ENCODE measurements at regions of chr7 and their contacts with region 1.

Region 1: GRCh38 chr7:92421676-92422435 is 25.4 kb upstream of the GATAD1 start:
- DNase-seq: no peak
- H3K4me3 Mint-ChIP-seq: no peak overlapping the region
- H3K27ac Mint-ChIP-seq: no peak overlapping the region
- H3K4me1 Mint-ChIP-seq: peaks cover 14% of the 10 kb centered on the region
- H3K27me3 Mint-ChIP-seq: peaks cover 3% of the 10 kb centered on the region

Region 2: DNA sequence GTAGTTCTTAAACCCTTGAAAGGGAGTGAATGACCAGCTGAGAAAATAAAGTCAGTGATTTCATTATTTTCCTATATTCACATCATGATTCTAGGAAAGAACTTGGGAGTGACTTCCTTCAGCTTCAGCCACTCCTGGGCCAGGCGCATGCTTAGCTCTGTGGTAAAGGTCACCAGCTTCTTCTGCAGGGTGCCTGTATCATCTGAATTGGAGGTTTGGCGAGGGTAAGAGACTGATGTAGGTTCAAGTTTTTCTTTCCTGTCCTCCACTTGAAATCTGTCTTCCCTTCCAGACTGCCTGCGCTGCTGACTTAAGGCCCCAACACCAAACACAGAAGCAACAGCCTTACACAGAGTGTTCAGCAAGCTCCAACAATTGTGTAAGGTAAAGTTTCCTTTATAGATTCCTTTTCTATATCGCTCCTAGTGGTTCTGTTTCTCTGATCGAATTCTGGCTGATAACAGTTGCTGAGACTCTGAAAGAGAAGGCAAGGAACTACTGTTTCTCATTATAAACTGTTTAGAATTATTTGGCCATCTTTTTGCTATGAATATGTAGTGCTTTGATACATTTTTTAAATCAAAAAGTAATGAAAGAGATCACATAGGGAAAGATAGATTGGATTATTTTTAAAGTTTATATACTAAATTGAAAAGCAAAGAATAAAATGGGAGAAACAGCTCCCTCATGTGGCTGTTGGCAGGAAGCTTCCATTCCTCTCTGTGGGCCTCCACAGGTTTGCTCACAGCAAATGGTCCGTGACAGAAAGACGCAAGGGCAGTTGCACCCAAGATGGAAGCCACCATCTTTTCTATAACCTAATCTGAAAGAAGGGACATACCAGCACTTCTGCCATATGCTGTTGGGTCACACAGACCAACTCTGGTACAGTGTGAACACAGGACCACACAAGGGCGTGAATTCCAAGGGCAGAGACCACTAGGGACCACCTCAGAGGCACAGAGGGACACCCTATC is 39.5 kb after region 1 on chr7:
- intact Hi-C with region 1: loop called (anchors 5 kb)
- DNase-seq: peak; percentile 74
- H3K4me3 Mint-ChIP-seq: no peak overlapping the region
- H3K27ac Mint-ChIP-seq: no peak overlapping the region
- H3K4me1 Mint-ChIP-seq: peaks cover 2% of the 10 kb centered on the region
- H3K27me3 Mint-ChIP-seq: no peaks in the 10 kb centered on the region